Cardiac septum (tissue), 1 donor: ENCODE measurements at regions of chr11 and their contacts with region 1.

Region 1: GRCh38 chr11:86068951-86069407 is at the start of gene PICALM:
- DNase-seq: peak; percentile 99
- total RNA-seq, gene PICALM: 213 TPM

Region 2: DNA sequence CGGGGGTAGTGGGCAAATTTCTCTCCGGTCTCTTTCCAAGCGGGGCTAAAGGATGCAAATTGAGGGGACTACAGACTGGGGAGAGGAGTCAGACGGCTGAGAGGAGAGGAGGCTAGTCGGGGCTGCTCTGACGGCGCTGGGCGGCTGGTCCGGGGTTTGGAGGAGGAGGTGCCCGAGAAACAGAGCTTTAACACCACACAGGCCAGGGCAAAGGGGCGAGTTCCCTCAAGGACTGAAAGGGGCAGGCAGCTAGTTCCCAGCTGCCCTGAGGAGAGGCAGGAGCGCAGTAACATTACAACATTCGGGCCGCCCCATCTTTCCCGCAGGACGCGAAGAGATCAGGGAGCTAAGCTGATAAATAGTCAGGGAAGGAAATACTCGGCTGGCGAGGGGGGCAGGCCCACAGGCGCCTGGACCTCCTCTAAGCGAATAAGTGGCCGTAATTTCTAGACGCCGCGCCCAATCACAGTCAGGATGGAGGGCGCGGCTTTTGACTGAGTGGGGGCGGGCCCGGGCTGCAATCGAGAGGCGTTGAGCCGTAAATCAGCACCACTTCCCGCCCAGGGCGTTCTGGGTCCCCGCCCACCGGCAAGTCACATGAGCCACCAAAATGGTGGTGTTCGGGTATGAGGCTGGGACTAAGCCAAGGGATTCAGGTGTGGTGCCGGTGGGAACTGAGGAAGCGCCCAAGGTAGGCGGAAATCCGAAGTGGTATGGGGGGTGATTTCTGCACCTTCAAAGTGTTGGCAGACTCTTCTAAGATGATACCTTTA is 440.8 kb before region 1 on chr11 and contains the start of gene TMEM126B:
- intact Hi-C with region 1: loop called (anchors 5 kb)
- DNase-seq: peak; percentile 99
- total RNA-seq, gene TMEM126B: 45.2 TPM

Region 3: DNA sequence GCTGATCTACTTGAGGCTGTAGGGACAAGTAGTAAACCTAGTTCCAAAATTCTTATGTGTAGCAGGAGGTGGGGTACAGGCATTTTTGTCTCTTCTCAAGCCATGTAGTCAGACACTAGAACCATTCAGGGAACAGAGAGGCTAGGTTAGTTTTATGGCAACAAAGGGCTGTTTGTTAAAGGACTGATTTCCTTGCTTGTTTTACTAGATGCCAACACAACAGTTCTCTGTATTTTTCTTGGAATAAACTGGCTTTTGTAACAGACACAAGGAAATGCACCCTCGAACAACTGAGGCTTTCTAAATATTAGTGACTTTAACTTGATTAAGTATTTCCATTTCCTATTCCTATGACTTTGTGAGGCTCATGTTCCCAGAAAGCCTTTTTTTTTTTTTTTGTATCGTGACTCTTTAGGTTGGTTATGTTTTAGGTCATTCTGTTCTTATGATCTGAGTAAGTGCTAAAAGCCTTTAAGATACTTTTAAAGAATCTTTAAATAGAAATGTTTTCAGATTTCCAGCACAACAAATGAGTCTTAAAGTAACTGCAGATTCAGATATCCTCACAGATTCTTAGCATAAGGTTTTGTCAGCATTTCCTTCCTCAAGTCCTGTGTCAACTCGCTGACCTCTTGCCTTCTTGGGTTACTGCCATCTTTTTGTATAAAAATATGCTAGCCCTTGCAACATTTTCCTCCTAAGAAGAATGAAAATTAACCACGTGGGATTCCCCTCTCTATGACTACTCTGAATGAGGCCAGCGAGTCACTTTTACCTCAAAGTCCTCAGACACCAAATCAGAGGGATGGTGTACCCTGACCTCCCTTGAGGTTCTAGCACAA is 121.3 kb before region 1 on chr11:
- intact Hi-C with region 1: loop called (anchors 2 kb)
- DNase-seq: no peak

Region 4: DNA sequence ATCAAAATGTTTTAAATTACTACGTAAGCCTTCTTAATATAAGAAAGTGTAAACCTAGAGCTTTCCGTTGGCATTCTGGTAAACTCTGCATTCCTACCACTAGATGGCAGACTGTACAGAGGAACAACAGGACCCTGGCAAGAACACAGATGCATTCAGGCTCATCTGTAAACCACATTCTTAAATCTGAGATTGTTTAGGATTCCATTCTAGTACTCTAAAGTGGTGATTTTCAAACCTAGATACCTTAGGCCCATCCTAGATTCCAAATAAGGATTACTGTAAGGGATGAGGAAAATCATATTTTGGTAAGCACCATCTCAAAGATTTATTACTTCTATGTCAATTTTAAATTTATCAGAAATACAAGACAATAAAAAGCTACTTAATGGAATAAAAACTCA is 27.0 kb before region 1 on chr11:
- intact Hi-C with region 1: loop called (anchors 2 kb)
- DNase-seq: no peak

Region 5: DNA sequence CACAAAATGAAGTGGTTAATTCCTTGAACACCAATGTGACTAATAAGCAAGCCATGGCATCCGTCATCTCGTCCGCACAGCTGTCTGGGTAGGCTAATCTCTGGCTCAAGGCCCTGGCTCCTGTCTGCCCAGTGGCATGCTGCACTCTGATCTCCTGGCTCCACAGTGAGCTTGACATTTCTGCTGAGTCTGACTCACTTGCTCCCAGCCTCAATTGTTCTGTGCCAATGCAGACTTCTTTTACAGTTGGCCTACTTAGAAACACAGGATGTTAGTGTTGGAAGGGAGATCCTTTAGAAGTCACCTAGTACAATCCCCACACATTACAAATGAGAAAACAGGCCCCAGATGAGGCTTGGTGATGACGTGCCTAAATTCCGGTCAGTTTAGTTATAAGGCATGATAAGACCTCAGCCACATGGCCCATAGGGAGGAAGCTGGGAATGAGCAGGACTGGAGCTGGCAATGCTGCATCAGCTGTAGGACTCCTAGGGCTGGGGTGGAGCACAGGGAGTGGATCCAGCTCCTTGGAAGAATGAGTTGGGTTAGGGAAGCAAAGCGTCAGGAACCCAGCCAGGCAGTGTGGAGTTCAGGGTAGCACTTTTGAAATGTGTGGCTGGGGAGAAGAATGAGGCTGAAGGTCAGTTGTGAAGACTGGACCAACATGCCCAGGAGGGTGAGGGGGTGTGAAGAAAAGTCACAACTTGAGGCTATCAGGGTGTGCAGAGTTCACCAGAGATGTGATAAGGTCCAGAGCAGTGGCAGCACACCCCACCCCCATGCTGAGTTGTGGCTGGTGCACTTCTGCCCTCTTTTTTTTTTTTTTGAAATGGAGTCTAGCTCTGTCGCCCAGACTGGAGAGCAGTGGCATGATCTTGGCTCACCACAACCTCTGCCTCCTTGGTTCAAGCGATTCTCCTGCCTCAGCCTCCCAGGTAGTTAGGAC is 105.4 kb after region 1 on chr11:
- intact Hi-C with region 1: loop called (anchors 1 kb)
- DNase-seq: peak; percentile 90

Region 6: GRCh38 chr11:86193297-86194095 is 124.5 kb after region 1 on chr11:
- intact Hi-C with region 1: loop called (anchors 1 kb)
- DNase-seq: peak; percentile 87